IMR-90 (cell line): ENCODE measurements at regions of chrX and their contacts with region 1.

Region 1: GRCh38 chrX:45186643-45187026 is 14.0 kb downstream of the DIPK2B start:
- DNase-seq: no peak
- ATAC-seq: no peak; the same call in 1 of the 2 replicates
- H3K4me3 ChIP-seq: no peak overlapping the region
- H3K27ac ChIP-seq: no peak overlapping the region
- H3K4me1 ChIP-seq: no peaks in the 10 kb centered on the region
- H3K27me3 ChIP-seq: peaks cover 10% of the 10 kb centered on the region
- CTCF ChIP-seq: no peak
- POLR2A ChIP-seq: no peak
- RAD21 ChIP-seq: no peak

Region 2: DNA sequence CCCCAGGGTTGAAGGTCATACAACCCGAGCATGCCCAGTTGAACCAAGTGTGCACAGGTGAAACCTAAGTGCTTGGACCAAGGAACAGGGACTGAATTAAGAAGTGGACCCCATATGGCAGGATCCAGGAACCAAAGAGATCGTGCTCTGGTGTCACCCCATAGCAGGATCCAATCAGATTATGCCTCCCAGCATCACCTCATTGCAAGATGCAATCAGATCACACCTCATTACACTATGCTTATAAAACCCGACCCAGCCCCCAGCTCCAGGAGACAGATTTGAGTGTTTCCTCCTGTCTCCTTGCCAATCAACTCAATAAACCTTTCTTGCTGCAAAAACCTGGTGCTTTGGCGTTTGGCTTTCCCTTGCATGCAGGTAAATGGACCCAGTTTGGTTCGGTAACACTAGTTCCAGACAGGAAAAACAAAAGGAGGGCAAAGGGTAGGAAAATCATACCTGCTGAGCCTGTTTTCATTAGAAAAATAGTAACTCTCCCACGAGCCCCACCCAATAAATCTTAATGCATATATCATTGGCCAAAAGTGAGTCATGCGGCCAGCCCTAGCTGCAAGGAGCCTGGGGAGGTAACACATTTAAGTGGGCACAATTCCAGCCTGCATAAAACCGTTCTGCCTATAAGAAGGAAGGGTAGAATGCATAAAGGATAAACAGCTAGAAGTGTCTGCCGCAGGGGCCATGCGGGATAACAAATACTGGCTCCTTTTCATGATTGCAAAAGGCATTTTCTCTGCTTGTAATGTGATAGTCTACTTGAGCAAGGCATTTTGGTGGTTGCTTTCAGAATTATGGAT is 880.5 kb before region 1 on chrX:
- CTCF ChIA-PET with region 1: no interaction called
- POLR2A ChIA-PET with region 1: no interaction called
- dilution Hi-C with region 1: no loop called
- in situ Hi-C with region 1: no loop called
- intact Hi-C with region 1: no loop called
- DNase-seq: peak; percentile 20
- ATAC-seq: peak; percentile 24
- H3K4me3 ChIP-seq: no peak overlapping the region
- H3K27ac ChIP-seq: no peak overlapping the region
- H3K4me1 ChIP-seq: no peaks in the 10 kb centered on the region
- H3K27me3 ChIP-seq: no peaks in the 10 kb centered on the region
- CTCF ChIP-seq: no peak
- POLR2A ChIP-seq: no peak
- RAD21 ChIP-seq: no peak

Region 3: DNA sequence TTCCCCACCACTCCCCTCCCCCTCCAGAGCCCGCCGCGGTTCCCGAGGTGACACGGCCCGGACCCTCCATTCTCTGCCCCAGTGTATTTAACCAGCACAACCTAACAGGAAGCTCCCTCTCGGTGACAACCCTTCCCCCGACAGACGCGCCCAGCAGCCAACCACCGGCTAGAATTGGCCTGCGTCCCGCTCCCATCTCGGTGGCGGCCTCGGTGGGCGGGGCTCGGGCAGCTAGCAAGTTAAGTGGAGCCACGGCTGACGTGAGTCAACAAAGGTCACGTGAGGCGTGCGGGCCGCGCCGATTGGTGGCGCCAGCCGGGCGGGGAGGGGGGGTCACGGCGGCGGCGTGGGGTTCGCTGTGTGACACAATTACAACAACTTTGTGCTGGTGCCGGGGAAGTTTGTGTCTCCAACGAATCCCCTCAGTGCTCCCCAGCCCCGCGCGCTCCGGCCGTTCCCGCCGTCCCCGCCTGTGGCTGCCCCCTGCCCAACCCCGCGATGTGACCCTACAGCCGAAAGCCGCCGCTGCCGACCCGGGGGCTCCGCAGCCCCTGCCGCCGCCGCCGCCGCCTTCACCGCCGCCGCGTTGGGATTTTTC is 313.7 kb before region 1 on chrX and contains the start of gene KDM6A:
- CTCF ChIA-PET with region 1: no interaction called
- POLR2A ChIA-PET with region 1: no interaction called
- dilution Hi-C with region 1: no loop called
- in situ Hi-C with region 1: no loop called
- intact Hi-C with region 1: loop called (anchors 5 kb)
- DNase-seq: peak; percentile 96
- ATAC-seq: peak; percentile 90
- H3K4me3 ChIP-seq: peak within 1 kb of the TSS; percentile 93
- H3K27ac ChIP-seq: peak within 1 kb of the TSS; percentile 89
- H3K4me1 ChIP-seq: no peaks in the 10 kb centered on the region
- H3K27me3 ChIP-seq: no peaks in the 10 kb centered on the region
- CTCF ChIP-seq: no peak
- POLR2A ChIP-seq: peak; percentile 69
- RAD21 ChIP-seq: no peak
- total RNA-seq, gene KDM6A: 24.9 and 25.3 TPM in 2 replicates